ENCODE measurements at regions of chr4 and their contacts with region 1.

Region 1: GRCh38 chr4:55948726-55949474 is at the start of gene CEP135:
- DNase-seq: peak; percentile 85 to 96 (median 92)
- ATAC-seq: peak; percentile 70
- H3K4me3 ChIP-seq: peak within 1 kb of the TSS; percentile 66 to 86
- H3K4me3 Mint-ChIP-seq: peak within 1 kb of the TSS; percentile 88
- H3K27ac ChIP-seq: peak within 1 kb of the TSS; percentile 72 to 88
- H3K27ac Mint-ChIP-seq: peak within 1 kb of the TSS; percentile 92
- H3K4me1 ChIP-seq: peaks cover 21% of the 10 kb centered on the region
- H3K4me1 Mint-ChIP-seq: peaks cover 46% of the 10 kb centered on the region
- H3K27me3 ChIP-seq: no peaks in the 10 kb centered on the region
- H3K27me3 Mint-ChIP-seq: no peaks in the 10 kb centered on the region
- CTCF ChIP-seq: peak; percentile 78
- total RNA-seq, gene CEP135: 16.6 to 17.1 TPM

Region 2: DNA sequence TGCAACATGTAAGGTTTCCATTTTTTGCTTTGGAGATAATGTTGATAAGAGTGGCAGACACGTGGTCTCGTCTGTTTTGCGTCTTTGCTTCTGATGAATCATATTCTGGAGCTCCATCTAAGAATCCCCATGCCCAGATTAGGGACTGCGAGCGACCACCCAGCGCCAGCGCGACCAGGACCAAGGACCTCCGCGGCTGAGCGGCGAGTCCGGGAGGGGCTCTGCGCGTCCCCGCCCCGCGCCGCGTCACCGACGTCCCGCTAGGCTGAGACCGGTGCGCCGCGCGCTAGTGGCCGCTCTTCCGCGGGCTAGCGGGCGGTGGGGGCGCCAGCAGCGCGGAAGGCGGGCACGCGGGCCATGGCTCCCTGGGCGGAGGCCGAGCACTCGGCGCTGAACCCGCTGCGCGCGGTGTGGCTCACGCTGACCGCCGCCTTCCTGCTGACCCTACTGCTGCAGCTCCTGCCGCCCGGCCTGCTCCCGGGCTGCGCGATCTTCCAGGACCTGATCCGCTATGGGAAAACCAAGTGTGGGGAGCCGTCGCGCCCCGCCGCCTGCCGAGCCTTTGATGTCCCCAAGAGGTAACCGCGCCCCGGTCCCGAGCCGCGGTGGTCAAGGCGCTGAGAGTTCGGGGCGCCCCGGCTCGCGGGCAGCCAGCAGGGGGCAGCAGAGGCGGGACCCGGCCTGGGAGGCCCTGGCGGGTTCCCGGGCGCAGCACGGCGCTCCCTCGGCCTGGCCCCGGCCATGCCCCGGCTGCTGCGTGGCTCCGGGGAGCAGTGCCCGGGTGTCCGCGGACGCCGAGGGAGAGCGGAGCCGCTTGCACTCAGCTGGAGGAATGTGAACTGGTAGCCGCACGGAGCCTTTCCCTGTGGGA is 602.7 kb before region 1 on chr4 and contains the start of gene SRD5A3:
- CTCF ChIA-PET with region 1: no interaction called
- POLR2A ChIA-PET with region 1: no interaction called
- intact Hi-C with region 1: loop called in 1 of 2 experiments (anchors 2 kb)
- DNase-seq: peak; percentile 57 to 89 (median 81)
- ATAC-seq: peak; percentile 85
- H3K4me3 ChIP-seq: peak within 1 kb of the TSS; percentile 68 to 88
- H3K4me3 Mint-ChIP-seq: peak within 1 kb of the TSS; percentile 86
- H3K27ac ChIP-seq: peak within 1 kb of the TSS; percentile 64 to 81
- H3K27ac Mint-ChIP-seq: peak within 1 kb of the TSS; percentile 85
- H3K4me1 ChIP-seq: peaks cover 9% of the 10 kb centered on the region
- H3K4me1 Mint-ChIP-seq: peaks cover 14% of the 10 kb centered on the region
- H3K27me3 ChIP-seq: no peaks in the 10 kb centered on the region
- H3K27me3 Mint-ChIP-seq: no peaks in the 10 kb centered on the region
- CTCF ChIP-seq: peak; percentile 97
- total RNA-seq, gene SRD5A3: 1.1 TPM

Region 3: DNA sequence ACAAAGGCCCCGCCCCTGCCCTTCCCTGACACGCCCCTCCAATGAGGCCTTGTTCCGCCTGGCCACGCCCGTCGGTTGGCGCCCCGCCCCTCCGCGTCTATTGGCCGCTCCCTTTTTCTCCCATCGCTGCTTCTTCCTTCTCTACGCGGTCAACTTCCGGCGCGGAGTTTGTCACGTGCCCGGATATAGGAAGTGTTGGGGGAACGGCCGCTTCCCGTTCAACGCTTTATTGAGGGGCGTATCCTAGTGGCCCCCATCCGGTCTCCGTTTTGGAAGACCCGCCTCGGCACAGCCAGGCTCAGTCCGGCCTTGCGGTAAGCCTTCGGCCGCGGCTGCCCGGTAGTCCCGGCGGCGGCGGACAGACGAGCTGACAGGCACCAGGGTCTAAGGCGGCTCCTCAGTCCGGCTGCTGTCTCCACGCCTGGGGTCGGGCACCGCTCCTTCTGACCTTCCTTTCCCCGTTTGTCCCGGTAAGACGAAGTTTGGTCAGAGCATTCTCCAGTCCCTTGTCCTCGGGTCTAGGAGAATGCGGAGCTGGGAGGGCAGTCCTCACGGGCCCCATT is 95.3 kb before region 1 on chr4 and contains the start of gene EXOC1:
- CTCF ChIA-PET with region 1: interaction called, 3 read pairs
- POLR2A ChIA-PET with region 1: interaction called, 6 read pairs
- intact Hi-C with region 1: loop called (anchors 1 to 2 kb)
- DNase-seq: peak; percentile 90 to 98 (median 97)
- ATAC-seq: peak; percentile 96
- H3K4me3 ChIP-seq: peak within 1 kb of the TSS; percentile 96
- H3K4me3 Mint-ChIP-seq: peak within 1 kb of the TSS; percentile 36
- H3K27ac ChIP-seq: peak within 1 kb of the TSS; percentile 70 to 86
- H3K27ac Mint-ChIP-seq: peak within 1 kb of the TSS; percentile 64
- H3K4me1 ChIP-seq: peaks cover 40% of the 10 kb centered on the region
- H3K4me1 Mint-ChIP-seq: peaks cover 38% of the 10 kb centered on the region
- H3K27me3 ChIP-seq: no peaks in the 10 kb centered on the region
- H3K27me3 Mint-ChIP-seq: no peaks in the 10 kb centered on the region
- CTCF ChIP-seq: no peak
- total RNA-seq, gene EXOC1: 12.1 to 14.5 TPM

Region 4: GRCh38 chr4:56330691-56331090 is 381.8 kb after region 1 on chr4:
- CTCF ChIA-PET with region 1: no interaction called
- POLR2A ChIA-PET with region 1: no interaction called
- intact Hi-C with region 1: no loop called
- DNase-seq: no peak
- ATAC-seq: no peak
- H3K4me3 ChIP-seq: no peak overlapping the region
- H3K4me3 Mint-ChIP-seq: no peak overlapping the region
- H3K27ac ChIP-seq: no peak overlapping the region
- H3K27ac Mint-ChIP-seq: no peak overlapping the region
- H3K4me1 ChIP-seq: no peaks in the 10 kb centered on the region
- H3K4me1 Mint-ChIP-seq: no peaks in the 10 kb centered on the region
- H3K27me3 ChIP-seq: no peaks in the 10 kb centered on the region
- H3K27me3 Mint-ChIP-seq: no peaks in the 10 kb centered on the region
- CTCF ChIP-seq: no peak

Region 5: DNA sequence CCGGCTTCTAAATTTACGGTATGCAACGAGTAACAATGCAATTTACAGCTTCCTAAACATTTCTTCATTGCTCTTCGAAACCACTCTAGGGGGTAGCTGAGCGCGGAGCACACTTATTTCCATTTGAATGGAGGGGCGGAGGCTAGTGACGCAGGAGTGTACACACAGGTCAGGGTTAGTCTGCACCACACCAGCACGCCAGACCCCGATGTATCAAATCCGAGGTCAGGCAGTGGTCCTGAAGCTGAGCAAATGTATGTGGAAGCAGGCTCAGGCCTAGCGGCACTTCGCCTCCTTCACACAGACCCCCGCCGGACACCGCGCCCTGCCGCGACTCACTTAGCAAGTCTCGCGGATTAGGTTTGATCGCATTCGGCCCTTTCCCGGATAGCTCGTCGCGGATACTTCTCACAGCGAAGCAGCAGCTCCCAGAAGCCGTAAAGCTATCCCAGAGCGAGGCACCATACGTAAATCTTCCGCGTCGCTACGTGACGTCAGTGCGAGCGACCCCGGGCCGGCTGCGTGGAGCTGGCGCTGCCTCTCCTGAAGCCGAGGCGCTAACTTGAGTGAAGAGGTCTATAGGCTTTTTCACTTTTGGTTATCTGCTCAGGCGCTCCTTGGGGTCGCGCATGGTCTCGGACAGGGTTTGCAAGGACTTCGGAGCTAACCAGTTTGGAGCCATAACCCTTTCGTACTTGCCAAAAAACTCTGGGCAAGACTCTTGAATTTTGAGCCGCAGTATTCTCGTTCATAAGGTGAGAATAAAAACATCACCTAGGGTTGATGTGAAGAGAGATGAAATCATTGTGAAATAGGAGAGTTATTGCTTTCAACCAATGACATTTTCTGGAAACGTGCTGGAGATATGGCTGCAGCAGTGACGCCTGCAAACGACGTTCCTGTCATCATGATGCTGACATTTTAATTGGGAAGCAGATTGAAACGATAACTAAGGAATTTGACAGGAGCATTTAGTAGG is 438.4 kb after region 1 on chr4 and contains the start of gene AASDH:
- CTCF ChIA-PET with region 1: interaction called, 3 read pairs
- POLR2A ChIA-PET with region 1: interaction called, 5 read pairs
- intact Hi-C with region 1: loop called (anchors 1 to 5 kb)
- DNase-seq: peak; percentile 91 to 99 (median 96)
- ATAC-seq: peak; percentile 88
- H3K4me3 ChIP-seq: peak within 1 kb of the TSS; percentile 79 to 82
- H3K4me3 Mint-ChIP-seq: peak within 1 kb of the TSS; percentile 97
- H3K27ac ChIP-seq: peak within 1 kb of the TSS; percentile 93 to 94
- H3K27ac Mint-ChIP-seq: peak within 1 kb of the TSS; percentile 99
- H3K4me1 ChIP-seq: peaks cover 21% of the 10 kb centered on the region
- H3K4me1 Mint-ChIP-seq: peaks cover 46% of the 10 kb centered on the region
- H3K27me3 ChIP-seq: no peaks in the 10 kb centered on the region
- H3K27me3 Mint-ChIP-seq: no peaks in the 10 kb centered on the region
- CTCF ChIP-seq: no peak
- total RNA-seq, gene AASDH: 9.1 to 9.8 TPM

Region 6: DNA sequence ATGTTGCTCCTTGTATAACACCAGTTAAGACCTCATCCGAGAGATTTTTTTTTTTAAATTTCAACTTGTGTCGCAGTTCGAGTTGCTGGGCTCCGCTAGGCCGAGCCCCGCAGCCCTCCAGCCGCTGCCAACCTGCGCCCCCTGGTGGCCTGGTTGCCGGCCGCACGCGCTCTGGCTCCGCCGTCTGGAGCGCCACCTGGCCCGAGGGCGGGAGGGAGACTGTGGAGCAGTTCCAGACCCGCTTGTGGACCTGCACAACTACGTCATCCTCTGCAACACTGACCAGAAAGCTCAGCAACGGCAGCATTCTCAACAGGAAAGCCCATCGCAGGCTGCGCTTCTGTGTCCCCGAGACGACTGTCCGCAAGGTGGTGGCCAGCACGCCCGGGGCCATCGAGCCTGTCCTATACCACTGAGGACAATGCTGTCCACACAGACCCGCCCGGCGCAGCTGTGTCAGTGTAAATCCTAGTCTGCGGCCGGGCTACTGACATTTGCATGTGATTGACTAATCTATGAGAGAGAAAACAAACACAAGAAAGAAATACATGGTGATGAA is 595.8 kb after region 1 on chr4:
- CTCF ChIA-PET with region 1: no interaction called
- POLR2A ChIA-PET with region 1: no interaction called
- intact Hi-C with region 1: loop called in 1 of 2 experiments (anchors 10 kb)
- DNase-seq: peak; percentile 77 to 95 (median 85)
- ATAC-seq: peak; percentile 99
- H3K4me3 ChIP-seq: peak overlapping the region; percentile 27 to 38
- H3K4me3 Mint-ChIP-seq: peak overlapping the region; percentile 73
- H3K27ac ChIP-seq: no peak overlapping the region
- H3K27ac Mint-ChIP-seq: no peak overlapping the region
- H3K4me1 ChIP-seq: peaks cover 14% of the 10 kb centered on the region
- H3K4me1 Mint-ChIP-seq: peaks cover 15% of the 10 kb centered on the region
- H3K27me3 ChIP-seq: peaks cover 0 to 6% of the 10 kb centered on the region in 2 experiments
- H3K27me3 Mint-ChIP-seq: no peaks in the 10 kb centered on the region
- CTCF ChIP-seq: peak; percentile 98

Region 7: GRCh38 chr4:56977321-56978012 is 1028.6 kb after region 1 on chr4 and contains the start of gene NOA1:
- CTCF ChIA-PET with region 1: no interaction called
- POLR2A ChIA-PET with region 1: interaction called, 5 read pairs
- intact Hi-C with region 1: loop called in 1 of 2 experiments (anchors 5 kb)
- DNase-seq: peak; percentile 95 to 99 (median 97)
- ATAC-seq: peak; percentile 79
- H3K4me3 ChIP-seq: peak within 1 kb of the TSS; percentile 94 to 100
- H3K4me3 Mint-ChIP-seq: peak within 1 kb of the TSS; percentile 93
- H3K27ac ChIP-seq: peak within 1 kb of the TSS; percentile 78 to 84
- H3K27ac Mint-ChIP-seq: peak within 1 kb of the TSS; percentile 94
- H3K4me1 ChIP-seq: peaks cover 45% of the 10 kb centered on the region
- H3K4me1 Mint-ChIP-seq: peaks cover 56% of the 10 kb centered on the region
- H3K27me3 ChIP-seq: no peaks in the 10 kb centered on the region
- H3K27me3 Mint-ChIP-seq: no peaks in the 10 kb centered on the region
- CTCF ChIP-seq: no peak
- total RNA-seq, gene NOA1: 16.5 to 17.2 TPM

Measured in CD8-positive, alpha-beta T cell (primary cell).